ENCODE measurements at regions of chr5 and their contacts with region 1.

Region 1: DNA sequence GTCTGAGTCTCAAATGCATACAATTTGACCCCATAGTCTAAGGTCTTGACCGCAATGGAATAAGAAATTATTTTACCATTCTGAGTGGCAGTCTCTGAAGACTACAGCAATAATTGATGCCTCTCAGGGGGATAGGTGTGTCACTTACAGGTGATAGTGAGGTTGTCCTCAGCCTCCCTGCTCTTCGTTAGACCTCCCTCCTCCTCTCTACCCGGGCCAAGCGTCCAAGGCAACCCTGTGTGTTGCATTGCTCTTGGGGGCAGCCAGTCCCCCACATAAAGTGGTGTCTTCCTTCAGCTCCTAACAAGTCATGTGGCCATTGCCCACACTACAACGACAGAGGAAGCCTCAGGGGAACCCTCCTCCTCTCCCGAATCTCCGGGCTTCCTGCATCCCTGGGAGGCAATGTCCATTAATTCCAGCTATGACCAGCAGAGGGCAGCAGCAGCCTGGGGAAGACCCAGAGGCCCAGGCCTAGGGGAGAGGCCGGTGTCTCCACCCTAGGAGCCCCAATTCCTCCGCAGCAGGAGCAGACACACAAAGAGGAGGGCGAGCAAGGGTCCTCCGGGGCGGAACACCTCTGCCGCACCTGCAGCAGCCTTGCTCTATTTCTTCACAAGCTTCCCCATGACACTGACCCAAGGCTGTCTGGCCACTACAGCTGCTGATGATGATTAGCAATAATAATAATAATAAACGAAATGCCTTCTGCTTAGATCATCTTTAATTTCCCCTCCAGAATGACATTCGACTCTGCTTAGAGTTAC is 134.8 kb downstream of the KCNIP1 start:
- DNase-seq: peak; percentile 61 to 71
- H3K4me3 ChIP-seq: no peak overlapping the region
- H3K27ac ChIP-seq: no peak overlapping the region
- H3K4me1 ChIP-seq: peaks cover 7 to 8% of the 10 kb centered on the region in 2 donors
- H3K27me3 ChIP-seq: no peaks in the 10 kb centered on the region
- CTCF ChIP-seq: peak; percentile 63 to 89 (median 78)
- POLR2A ChIP-seq: no peak

Region 2: GRCh38 chr5:170504031-170504596 is 134.5 kb before region 1 on chr5:
- intact Hi-C with region 1: no loop called
- DNase-seq: peak; percentile 35 to 44
- H3K4me3 ChIP-seq: no peak overlapping the region
- H3K27ac ChIP-seq: no peak overlapping the region
- H3K4me1 ChIP-seq: peaks cover 0 to 6% of the 10 kb centered on the region in 2 donors
- H3K27me3 ChIP-seq: no peaks in the 10 kb centered on the region
- CTCF ChIP-seq: no peak
- POLR2A ChIP-seq: no peak

Region 3: DNA sequence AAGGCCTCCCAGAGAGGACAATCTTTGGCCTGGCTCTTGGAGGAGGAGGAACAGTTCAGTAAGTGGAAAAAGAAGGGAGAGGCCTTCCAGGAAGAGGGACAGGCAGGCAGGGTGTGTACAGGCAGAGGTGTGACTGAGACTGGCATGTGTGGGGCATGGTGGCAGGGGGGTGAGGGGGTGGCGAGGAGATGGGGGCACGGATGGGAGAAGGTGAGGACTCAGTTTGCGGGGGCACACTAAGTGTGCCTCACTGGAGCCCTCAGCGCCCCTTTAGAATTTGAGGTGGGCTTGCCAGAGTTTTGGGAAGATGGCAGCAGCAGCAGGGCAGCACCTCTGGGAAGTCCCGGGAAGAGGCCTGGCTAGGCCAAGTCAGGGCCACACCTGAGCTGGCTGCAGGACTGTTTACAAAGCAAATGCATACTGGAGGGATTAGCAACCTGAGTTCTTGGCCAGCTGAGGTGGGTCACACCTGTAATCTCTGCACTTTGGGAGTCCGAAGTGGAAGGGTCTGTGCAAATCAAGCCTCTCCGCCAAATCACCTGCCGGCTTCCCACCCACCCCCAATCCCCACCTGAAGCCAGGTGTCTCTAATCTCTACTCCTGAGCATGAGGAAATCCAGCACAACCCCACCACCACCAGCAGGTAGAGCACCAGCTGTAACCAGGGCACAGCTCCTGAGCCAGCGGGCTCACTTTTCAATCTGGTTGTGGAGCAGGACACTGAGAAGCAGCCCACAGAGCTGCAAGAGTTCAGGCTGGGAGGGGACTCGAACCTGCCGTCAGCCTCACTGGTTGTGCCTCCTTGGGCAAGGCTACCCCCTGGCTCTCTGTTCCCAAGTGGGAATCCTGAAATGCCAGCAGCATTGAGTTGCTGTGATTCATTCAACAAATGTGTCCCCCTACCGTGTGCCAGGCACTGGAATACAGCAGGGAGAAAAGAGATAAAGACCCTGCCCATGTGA is 134.7 kb after region 1 on chr5:
- intact Hi-C with region 1: loop called (anchors 10 kb)
- DNase-seq: peak in 1 of 2 donors; percentile 14
- H3K4me3 ChIP-seq: no peak overlapping the region
- H3K27ac ChIP-seq: no peak overlapping the region
- H3K4me1 ChIP-seq: no peaks in the 10 kb centered on the region
- H3K27me3 ChIP-seq: no peaks in the 10 kb centered on the region
- CTCF ChIP-seq: no peak
- POLR2A ChIP-seq: no peak